ENCODE measurements at regions of chr4 and their contacts with region 1.

Region 1: GRCh38 chr4:81351654-81352445 is 119.9 kb downstream of the RASGEF1B start:
- DNase-seq: peak; percentile 26
- H3K4me3 ChIP-seq: no peak overlapping the region
- CTCF ChIP-seq: peak; percentile 85

Region 2: GRCh38 chr4:80767944-80768343 is 583.9 kb before region 1 on chr4:
- CTCF ChIA-PET with region 1: no interaction called
- POLR2A ChIA-PET with region 1: no interaction called
- DNase-seq: no peak
- H3K4me3 ChIP-seq: no peak overlapping the region
- CTCF ChIP-seq: no peak

Region 3: DNA sequence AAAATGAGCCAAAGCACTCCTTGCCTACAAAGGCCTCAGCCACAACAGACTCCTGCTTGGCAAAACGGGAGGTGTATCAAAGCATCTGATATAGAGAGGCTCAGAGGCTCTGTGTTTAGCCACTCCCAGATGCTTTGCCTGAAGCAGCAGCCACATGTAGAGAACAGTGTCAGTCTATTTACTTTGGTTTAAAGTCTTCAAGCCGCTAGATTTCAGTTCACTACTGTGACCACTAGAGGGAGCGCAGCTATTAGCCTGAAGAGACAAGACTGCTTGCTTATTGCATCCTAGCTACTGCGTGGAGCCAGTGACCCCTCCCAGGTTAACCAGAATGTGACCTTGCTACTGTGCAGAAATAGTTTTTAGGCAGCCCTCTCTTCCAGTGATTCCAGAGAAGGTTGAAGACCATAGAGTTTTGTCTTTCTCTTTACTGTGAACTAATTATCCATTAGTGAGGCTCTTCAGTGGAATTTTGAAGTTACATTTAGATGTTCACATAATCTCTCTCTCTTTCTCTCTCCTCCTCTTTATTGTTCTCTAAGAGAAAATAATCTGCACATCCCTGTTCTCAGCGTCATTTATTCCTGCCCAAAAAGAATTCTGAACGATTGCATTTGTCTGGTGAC is 282.0 kb before region 1 on chr4:
- CTCF ChIA-PET with region 1: interaction called, 91 read pairs
- POLR2A ChIA-PET with region 1: no interaction called
- DNase-seq: peak; percentile 56
- H3K4me3 ChIP-seq: no peak overlapping the region
- CTCF ChIP-seq: peak; percentile 90

Region 4: DNA sequence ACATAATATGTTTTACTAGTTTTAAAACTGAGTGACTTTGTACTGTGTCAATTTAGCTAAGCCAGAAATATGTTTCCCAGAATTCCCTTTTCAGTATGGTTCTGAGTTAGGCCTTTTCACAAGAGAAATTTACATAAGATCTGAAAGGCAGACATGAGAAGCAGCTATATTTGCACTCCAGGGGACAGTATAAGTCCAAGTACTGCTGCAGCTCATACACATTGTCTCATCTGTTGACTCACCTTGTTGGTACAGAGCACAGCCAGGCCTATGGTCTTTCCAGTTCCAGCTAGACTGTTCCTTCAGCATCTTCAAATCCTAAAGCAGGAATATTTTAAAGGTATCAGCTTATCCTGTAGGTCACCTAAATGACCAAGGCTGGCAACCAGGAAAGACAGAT is 267.8 kb before region 1 on chr4:
- CTCF ChIA-PET with region 1: interaction called, 11 read pairs
- POLR2A ChIA-PET with region 1: no interaction called
- DNase-seq: no peak
- H3K4me3 ChIP-seq: no peak overlapping the region
- CTCF ChIP-seq: peak; percentile 6

Region 5: GRCh38 chr4:81335122-81335912 is 16.5 kb before region 1 on chr4:
- CTCF ChIA-PET with region 1: interaction called, 28 read pairs
- POLR2A ChIA-PET with region 1: no interaction called
- DNase-seq: no peak
- H3K4me3 ChIP-seq: no peak overlapping the region
- CTCF ChIP-seq: no peak

Region 6: DNA sequence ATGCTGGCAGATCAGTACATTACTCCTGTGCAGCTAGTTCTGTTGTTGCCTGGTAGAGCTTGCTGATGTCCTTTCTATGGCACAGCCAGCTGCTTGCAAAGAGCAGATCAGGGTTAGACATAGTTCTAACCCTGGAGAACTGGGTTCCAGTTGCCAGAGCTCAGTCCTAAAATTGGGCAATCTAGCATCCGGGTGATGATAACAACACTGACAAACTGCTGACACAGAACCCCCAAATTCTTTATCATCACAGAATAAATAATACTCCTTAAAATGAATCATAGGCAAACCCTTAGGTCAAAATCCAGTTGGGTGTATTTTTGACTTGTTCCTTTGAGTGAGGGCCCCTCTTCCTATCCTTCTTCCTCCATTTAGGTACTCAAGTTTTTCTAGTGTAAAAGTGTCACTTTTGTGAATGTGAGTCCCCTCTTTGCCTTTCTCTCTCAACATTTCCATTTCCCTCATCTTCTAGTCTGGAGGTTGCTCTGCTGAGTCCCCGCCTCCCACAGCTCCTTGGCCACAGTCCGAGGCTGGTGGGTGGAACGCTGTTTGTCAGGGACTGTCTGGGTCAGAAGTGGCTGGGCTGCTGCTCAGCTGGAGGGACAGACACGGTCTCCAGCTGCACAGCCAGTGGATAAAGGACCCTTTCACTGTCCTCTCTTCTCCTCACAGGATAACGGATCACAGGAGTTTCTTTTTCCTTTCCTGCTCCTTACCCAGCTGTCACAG is 213.5 kb after region 1 on chr4:
- CTCF ChIA-PET with region 1: no interaction called
- POLR2A ChIA-PET with region 1: no interaction called
- DNase-seq: no peak
- H3K4me3 ChIP-seq: no peak overlapping the region
- CTCF ChIP-seq: no peak

Region 7: GRCh38 chr4:81722290-81722851 is 370.5 kb after region 1 on chr4:
- CTCF ChIA-PET with region 1: no interaction called
- POLR2A ChIA-PET with region 1: no interaction called
- DNase-seq: no peak
- H3K4me3 ChIP-seq: no peak overlapping the region
- CTCF ChIP-seq: no peak